CD4-positive, alpha-beta memory T cell (primary cell): ENCODE measurements at regions of chr7 and their contacts with region 1.

Region 1: GRCh38 chr7:100705753-100706671 is at the start of gene POP7:
- DNase-seq: peak; percentile 96 to 97 (median 97)
- H3K4me3 ChIP-seq: peak within 1 kb of the TSS; percentile 89 to 90
- H3K4me3 Mint-ChIP-seq: peak within 1 kb of the TSS; percentile 93 to 100 (median 96)
- H3K27ac ChIP-seq: peak within 1 kb of the TSS; percentile 79
- H3K27ac Mint-ChIP-seq: peak within 1 kb of the TSS; percentile 90 to 98 (median 96)
- H3K4me1 ChIP-seq: peaks cover 16% of the 10 kb centered on the region
- H3K4me1 Mint-ChIP-seq: peaks cover 5 to 18% (median 11%) of the 10 kb centered on the region in 4 donors
- H3K27me3 ChIP-seq: no peaks in the 10 kb centered on the region
- H3K27me3 Mint-ChIP-seq: peaks cover 2 to 3% of the 10 kb centered on the region in 2 donors
- total RNA-seq, gene POP7: 14.6 to 16.0 TPM

Region 2: DNA sequence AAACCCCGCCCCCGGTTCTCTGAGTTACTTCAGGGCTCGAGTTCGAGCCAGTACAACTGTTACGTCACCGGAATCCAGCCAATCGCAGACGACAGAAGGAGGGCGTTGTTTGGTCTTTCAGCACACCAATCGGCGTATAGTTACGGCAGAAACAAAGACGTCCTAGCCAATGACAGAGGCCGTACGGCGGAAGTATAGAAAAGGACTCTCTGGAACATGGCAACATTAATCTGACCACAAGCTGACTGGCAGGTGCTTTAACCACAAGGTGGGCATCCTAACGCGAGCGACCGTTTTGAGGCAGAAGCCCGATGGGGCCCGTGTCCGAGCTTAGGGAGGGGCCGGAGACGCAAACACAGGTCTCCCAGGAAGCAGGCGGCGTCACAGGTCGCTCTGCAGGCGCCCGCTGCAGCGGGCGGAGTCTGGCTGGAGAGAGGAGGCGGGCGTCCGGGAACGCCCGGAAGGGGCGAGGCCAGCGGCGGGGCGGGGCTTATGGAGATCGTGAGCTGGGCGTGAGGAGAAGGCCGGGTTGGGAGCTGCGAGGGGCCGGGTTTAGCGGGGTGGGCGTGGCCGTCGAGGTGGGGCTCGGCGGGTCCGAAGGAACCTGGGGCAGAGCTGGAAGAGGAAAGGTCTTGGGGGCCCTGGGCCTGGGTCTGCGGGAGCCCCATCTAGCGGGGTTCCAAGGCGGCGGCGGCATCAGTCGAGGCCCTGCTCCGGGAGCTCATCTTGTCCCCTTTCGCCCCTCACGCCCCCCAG is 93.9 kb before region 1 on chr7 and contains the start of gene MOSPD3:
- CTCF ChIA-PET with region 1: interaction called, 28 read pairs
- POLR2A ChIA-PET with region 1: interaction called, 13 read pairs
- intact Hi-C with region 1: no loop called
- DNase-seq: peak; percentile 98 to 99 (median 98)
- H3K4me3 ChIP-seq: peak within 1 kb of the TSS; percentile 74 to 96
- H3K4me3 Mint-ChIP-seq: peak within 1 kb of the TSS; percentile 96 to 100 (median 98)
- H3K27ac ChIP-seq: peak within 1 kb of the TSS; percentile 85
- H3K27ac Mint-ChIP-seq: peak within 1 kb of the TSS; percentile 96 to 100 (median 100)
- H3K4me1 ChIP-seq: peaks cover 18% of the 10 kb centered on the region
- H3K4me1 Mint-ChIP-seq: peaks cover 14 to 32% (median 24%) of the 10 kb centered on the region in 4 donors
- H3K27me3 ChIP-seq: no peaks in the 10 kb centered on the region
- H3K27me3 Mint-ChIP-seq: no peaks in the 10 kb centered on the region
- total RNA-seq, gene MOSPD3: 13.4 to 15.6 TPM

Region 3: GRCh38 chr7:100673300-100673941 is 32.6 kb before region 1 on chr7 and contains the start of gene GNB2:
- CTCF ChIA-PET with region 1: interaction called, 15 read pairs
- POLR2A ChIA-PET with region 1: interaction called, 29 read pairs
- intact Hi-C with region 1: loop called (anchors 1 kb)
- DNase-seq: peak; percentile 97 to 98 (median 97)
- H3K4me3 ChIP-seq: peak within 1 kb of the TSS; percentile 80 to 91
- H3K4me3 Mint-ChIP-seq: peak within 1 kb of the TSS; percentile 94 to 99 (median 96)
- H3K27ac ChIP-seq: peak within 1 kb of the TSS; percentile 92
- H3K27ac Mint-ChIP-seq: peak within 1 kb of the TSS; percentile 96 to 99 (median 97)
- H3K4me1 ChIP-seq: peaks cover 30% of the 10 kb centered on the region
- H3K4me1 Mint-ChIP-seq: peaks cover 3 to 33% (median 14%) of the 10 kb centered on the region in 4 donors
- H3K27me3 ChIP-seq: no peaks in the 10 kb centered on the region
- H3K27me3 Mint-ChIP-seq: peaks cover 0 to 1% of the 10 kb centered on the region in 2 donors
- total RNA-seq, gene GNB2: 138 to 144 TPM

Region 4: DNA sequence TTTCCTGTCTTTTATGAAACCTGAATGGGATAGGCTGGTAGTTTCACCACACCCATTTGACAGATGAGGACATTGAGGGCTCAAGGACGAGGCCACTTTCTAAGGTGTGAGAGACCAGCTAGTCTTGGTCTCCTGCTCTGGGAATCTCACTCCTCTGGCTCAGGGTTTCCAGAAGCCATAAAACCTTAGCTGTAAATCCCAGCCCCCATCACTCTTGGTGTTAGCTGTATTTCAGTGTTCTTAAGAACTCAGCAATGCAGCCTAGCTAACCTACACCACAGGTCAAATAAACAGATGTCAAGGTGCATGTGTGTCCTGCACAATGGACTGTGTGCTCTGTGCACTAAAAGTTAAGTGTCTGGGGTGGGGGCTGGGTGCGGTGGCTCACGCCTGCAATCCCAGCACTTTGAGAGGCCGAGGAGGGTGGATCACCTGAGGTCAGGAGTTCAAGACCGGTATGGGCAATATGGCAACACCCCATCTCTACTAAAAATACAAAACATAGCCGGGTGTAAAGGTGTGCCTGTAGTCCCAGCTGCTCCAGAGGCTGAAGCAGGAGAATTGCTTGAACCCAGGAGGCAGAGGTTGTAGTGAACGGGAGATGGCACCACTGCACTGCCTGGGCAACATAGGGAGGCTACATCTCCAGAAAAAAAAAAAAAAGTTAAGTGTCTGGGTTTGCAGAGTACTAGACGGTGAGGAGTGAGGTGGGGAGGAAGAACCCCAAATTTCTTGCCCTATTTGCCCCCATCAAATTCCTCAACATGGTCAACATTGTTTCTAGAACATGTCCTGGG is 13.7 kb after region 1 on chr7:
- CTCF ChIA-PET with region 1: interaction called, 45 read pairs
- POLR2A ChIA-PET with region 1: interaction called, 3 read pairs
- intact Hi-C with region 1: no loop called
- DNase-seq: no peak
- H3K4me3 ChIP-seq: no peak overlapping the region
- H3K4me3 Mint-ChIP-seq: peak overlapping the region in 1 of 8 donors; percentile 24
- H3K27ac ChIP-seq: no peak overlapping the region
- H3K27ac Mint-ChIP-seq: no peak overlapping the region
- H3K4me1 ChIP-seq: no peaks in the 10 kb centered on the region
- H3K4me1 Mint-ChIP-seq: peaks cover 0 to 1% (median 0%) of the 10 kb centered on the region in 4 donors
- H3K27me3 ChIP-seq: peaks cover 8% of the 10 kb centered on the region
- H3K27me3 Mint-ChIP-seq: peaks cover 20 to 46% of the 10 kb centered on the region in 2 donors

Region 5: DNA sequence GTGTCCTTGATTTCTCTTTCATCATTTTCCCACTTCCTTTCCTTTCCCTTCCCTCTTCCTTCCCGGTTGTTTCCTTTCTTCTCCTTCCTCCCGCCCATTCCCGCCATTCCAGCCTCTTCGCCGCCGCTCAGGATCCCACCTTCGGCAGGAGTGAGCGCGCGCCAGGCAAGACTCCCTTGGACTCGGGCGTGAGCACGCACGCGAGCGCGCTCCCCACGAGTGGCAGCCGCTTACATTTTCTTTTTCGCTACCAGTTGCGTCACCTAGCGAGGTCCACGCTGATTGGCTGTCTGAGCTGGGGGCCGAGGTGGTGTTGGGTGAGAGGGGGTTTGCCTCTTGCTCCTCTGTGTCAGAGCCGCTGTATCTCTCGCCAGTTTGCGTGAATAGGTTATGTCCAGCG is 39.2 kb after region 1 on chr7:
- CTCF ChIA-PET with region 1: no interaction called
- POLR2A ChIA-PET with region 1: no interaction called
- intact Hi-C with region 1: no loop called
- DNase-seq: peak in 1 of 5 donors; percentile 9
- H3K4me3 ChIP-seq: no peak overlapping the region
- H3K4me3 Mint-ChIP-seq: peak overlapping the region in 4 of 8 donors; percentile 55 to 79 (median 70)
- H3K27ac ChIP-seq: no peak overlapping the region
- H3K27ac Mint-ChIP-seq: peak overlapping the region in 1 of 7 donors; percentile 52
- H3K4me1 ChIP-seq: no peaks in the 10 kb centered on the region
- H3K4me1 Mint-ChIP-seq: peaks cover 2 to 5% (median 3%) of the 10 kb centered on the region in 4 donors
- H3K27me3 ChIP-seq: no peaks in the 10 kb centered on the region
- H3K27me3 Mint-ChIP-seq: peaks cover 17 to 22% of the 10 kb centered on the region in 2 donors

Region 6: DNA sequence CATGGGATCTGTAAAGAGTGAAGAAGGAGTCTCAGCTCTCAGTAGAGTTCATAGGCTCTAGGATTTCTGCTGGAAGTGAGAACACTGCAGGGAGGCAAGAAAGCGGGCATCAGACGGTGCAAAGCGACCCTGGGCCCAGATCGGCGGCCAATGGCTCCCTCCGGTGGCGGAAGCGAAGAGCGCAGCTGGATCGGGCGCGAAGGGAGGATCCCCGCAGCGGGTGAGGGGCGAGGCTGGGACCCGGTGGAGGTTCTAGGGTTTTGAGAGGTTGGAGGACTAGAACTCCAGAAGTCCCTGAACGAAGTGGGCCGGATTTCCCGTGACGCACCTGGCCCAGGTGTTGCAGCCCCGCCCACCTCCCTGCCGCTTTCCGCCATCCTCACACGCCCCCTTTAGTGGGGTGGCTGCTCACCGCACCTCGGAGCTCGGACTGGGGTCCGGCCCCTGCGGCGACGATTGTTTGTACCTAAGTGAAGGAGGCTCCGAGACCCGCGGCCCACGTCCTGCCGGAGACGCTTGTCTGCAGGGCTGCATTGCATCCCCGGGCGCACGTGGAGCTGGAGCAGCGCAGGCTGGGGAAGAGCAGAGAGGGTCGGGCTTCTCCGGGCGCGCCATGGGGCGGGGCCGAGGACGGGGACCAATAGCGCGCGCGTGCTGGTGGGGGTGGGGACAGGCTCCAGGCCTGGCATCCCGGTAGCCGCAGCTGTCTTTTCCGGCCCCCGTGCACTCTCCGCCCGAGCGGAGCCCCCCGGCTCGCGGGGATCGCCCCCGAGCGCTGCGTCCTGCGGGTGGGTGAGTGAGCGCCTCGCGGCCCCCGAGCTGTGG is 146.2 kb after region 1 on chr7 and contains the start of gene SLC12A9:
- CTCF ChIA-PET with region 1: interaction called, 62 read pairs
- POLR2A ChIA-PET with region 1: interaction called, 33 read pairs
- intact Hi-C with region 1: loop called (anchors 1 kb)
- DNase-seq: peak; percentile 83 to 91 (median 88)
- H3K4me3 ChIP-seq: peak within 1 kb of the TSS; percentile 84 to 86
- H3K4me3 Mint-ChIP-seq: peak within 1 kb of the TSS; percentile 88 to 96 (median 92)
- H3K27ac ChIP-seq: peak within 1 kb of the TSS; percentile 51
- H3K27ac Mint-ChIP-seq: peak within 1 kb of the TSS; percentile 88 to 95 (median 93)
- H3K4me1 ChIP-seq: peaks cover 25% of the 10 kb centered on the region
- H3K4me1 Mint-ChIP-seq: peaks cover 11 to 36% (median 20%) of the 10 kb centered on the region in 4 donors
- H3K27me3 ChIP-seq: no peaks in the 10 kb centered on the region
- H3K27me3 Mint-ChIP-seq: no peaks in the 10 kb centered on the region
- total RNA-seq, gene SLC12A9: 63.7 to 64.6 TPM

Region 7: GRCh38 chr7:100965723-100966541 is 259.9 kb after region 1 on chr7:
- CTCF ChIA-PET with region 1: no interaction called
- POLR2A ChIA-PET with region 1: no interaction called
- intact Hi-C with region 1: no loop called
- DNase-seq: peak; percentile 53 to 77 (median 64)
- H3K4me3 ChIP-seq: peak overlapping the region; percentile 36 to 47
- H3K4me3 Mint-ChIP-seq: peak overlapping the region; percentile 80 to 89 (median 84)
- H3K27ac ChIP-seq: no peak overlapping the region
- H3K27ac Mint-ChIP-seq: peak overlapping the region in 1 of 7 donors; percentile 39
- H3K4me1 ChIP-seq: peaks cover 21% of the 10 kb centered on the region
- H3K4me1 Mint-ChIP-seq: peaks cover 12 to 36% (median 19%) of the 10 kb centered on the region in 4 donors
- H3K27me3 ChIP-seq: peaks cover 38% of the 10 kb centered on the region
- H3K27me3 Mint-ChIP-seq: peaks cover 39 to 53% of the 10 kb centered on the region in 2 donors

Region 8: DNA sequence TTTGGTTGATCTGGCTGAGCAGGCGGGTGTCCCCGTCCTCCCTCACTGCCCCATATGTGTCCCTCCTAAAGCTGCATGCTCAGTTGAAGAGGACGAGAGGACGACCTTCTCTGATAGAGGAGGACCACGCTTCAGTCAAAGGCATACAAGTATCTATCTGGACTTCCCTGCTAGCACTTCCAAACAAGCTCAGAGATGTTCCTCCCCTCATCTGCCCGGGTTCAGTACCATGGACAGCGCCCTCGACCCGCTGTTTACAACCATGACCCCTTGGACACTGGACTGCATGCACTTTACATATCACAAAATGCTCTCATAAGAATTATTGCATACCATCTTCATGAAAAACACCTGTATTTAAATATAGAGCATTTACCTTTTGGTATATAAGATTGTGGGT is 352.3 kb after region 1 on chr7:
- CTCF ChIA-PET with region 1: interaction called, 9 read pairs
- POLR2A ChIA-PET with region 1: no interaction called
- intact Hi-C with region 1: loop called (anchors 1 kb)
- DNase-seq: peak; percentile 23 to 51 (median 31)
- H3K4me3 ChIP-seq: no peak overlapping the region
- H3K4me3 Mint-ChIP-seq: peak overlapping the region in 1 of 8 donors; percentile 15
- H3K27ac ChIP-seq: no peak overlapping the region
- H3K27ac Mint-ChIP-seq: no peak overlapping the region
- H3K4me1 ChIP-seq: no peaks in the 10 kb centered on the region
- H3K4me1 Mint-ChIP-seq: peaks cover 0 to 3% (median under 1%) of the 10 kb centered on the region in 4 donors
- H3K27me3 ChIP-seq: peaks cover 10% of the 10 kb centered on the region
- H3K27me3 Mint-ChIP-seq: peaks cover 26 to 38% of the 10 kb centered on the region in 2 donors

Region 9: GRCh38 chr7:101099969-101100781 is 394.2 kb after region 1 on chr7:
- CTCF ChIA-PET with region 1: no interaction called
- POLR2A ChIA-PET with region 1: no interaction called
- intact Hi-C with region 1: no loop called
- DNase-seq: no peak
- H3K4me3 ChIP-seq: no peak overlapping the region
- H3K4me3 Mint-ChIP-seq: no peak overlapping the region
- H3K27ac ChIP-seq: no peak overlapping the region
- H3K27ac Mint-ChIP-seq: no peak overlapping the region
- H3K4me1 ChIP-seq: no peaks in the 10 kb centered on the region
- H3K4me1 Mint-ChIP-seq: peaks cover 3 to 19% (median 12%) of the 10 kb centered on the region in 4 donors
- H3K27me3 ChIP-seq: no peaks in the 10 kb centered on the region
- H3K27me3 Mint-ChIP-seq: peaks cover 14 to 15% of the 10 kb centered on the region in 2 donors